HAP-1 (cell line): ENCODE measurements at regions of chr22 and their contacts with region 1.

Region 1: GRCh38 chr22:21754523-21754922 is 18.9 kb upstream of the YPEL1 start:
- DNase-seq: no peak
- H3K4me3 ChIP-seq: no peak overlapping the region
- H3K4me1 ChIP-seq: no peaks in the 10 kb centered on the region
- H3K27me3 ChIP-seq: no peaks in the 10 kb centered on the region

Region 2: GRCh38 chr22:21802056-21802455 is 47.5 kb after region 1 on chr22:
- in situ Hi-C with region 1: loop called (anchors 5 kb)
- DNase-seq: no peak
- H3K4me3 ChIP-seq: no peak overlapping the region
- H3K4me1 ChIP-seq: peaks cover 5% of the 10 kb centered on the region
- H3K27me3 ChIP-seq: no peaks in the 10 kb centered on the region

Region 3: DNA sequence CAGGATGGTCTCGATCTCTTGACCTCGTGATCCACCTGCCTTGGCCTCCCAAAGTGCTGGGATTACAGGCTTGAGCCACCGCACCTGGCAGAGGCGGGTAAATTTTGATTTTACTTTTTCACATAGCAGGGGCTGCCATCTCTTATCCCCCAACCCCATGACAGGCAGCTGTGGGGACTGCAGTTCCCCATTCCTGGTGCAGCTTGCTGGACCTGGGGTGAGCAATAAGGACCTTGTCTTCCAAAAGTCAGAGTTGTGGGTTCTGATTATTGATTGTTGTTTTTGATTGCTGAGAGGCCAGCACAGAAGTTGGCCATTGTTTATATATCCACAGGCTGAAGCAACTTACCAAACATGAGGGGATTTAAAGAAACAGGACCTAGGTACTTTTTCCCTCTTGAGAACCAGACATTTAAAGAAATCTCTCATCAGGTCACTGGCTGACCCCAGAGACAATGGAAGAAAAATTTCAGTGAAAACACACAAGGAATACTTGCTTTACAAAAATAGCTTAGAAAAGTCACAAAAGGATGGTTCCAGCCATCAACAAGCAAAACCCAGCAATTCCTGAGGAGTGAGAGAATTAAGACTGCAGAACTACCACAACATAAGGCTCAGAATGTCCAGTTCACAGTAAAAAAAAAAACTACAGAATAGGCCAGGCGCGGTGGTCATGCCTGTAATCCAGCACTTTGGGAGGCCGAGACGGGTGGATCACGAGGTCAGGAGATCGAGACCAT is 134.9 kb after region 1 on chr22:
- in situ Hi-C with region 1: no loop called
- DNase-seq: no peak
- H3K4me3 ChIP-seq: no peak overlapping the region
- H3K4me1 ChIP-seq: no peaks in the 10 kb centered on the region
- H3K27me3 ChIP-seq: no peaks in the 10 kb centered on the region

Region 4: DNA sequence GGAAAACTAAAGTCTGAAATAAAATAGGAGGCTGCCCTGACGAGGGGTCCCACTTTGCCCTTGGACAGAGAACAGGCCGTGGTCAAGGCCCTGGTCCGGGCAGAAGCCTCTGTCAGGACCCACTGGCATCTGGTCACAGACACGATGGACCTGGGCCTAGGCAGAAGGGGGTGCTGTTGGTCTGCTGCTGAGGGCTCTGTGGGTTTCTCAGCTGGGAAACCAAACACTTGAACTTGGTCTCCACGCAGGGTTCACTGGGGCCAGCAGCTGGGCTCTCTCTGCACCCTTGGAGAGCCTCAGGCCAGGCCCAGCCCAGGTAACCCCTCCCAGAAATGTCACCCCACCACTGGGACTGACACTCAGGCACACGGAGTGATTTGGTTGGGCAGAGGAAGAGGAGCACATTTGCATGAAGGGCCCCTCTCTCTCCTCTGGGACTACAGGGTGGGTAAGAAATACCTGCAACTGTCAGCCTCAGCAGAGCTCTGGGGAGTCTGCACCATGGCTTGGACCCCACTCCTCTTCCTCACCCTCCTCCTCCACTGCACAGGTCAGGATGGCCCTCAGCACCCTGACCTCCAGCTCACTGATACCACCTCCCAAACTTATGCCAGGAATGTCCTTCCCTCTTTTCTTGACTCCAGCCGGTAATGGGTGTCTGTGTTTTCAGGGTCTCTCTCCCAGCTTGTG is 276.1 kb after region 1 on chr22:
- in situ Hi-C with region 1: no loop called
- DNase-seq: peak in 1 of 2 experiments; percentile 21
- H3K4me3 ChIP-seq: no peak overlapping the region
- H3K4me1 ChIP-seq: peaks cover 11% of the 10 kb centered on the region
- H3K27me3 ChIP-seq: no peaks in the 10 kb centered on the region